Cardiac septum (tissue), 1 donor: ENCODE measurements at regions of chr4 and their contacts with region 1.

Region 1: GRCh38 chr4:112938461-112939058 is 110.9 kb upstream of the ANK2 start:
- DNase-seq: no peak

Region 2: GRCh38 chr4:112648263-112649054 is 290.1 kb before region 1 on chr4:
- intact Hi-C with region 1: no loop called
- DNase-seq: no peak

Region 3: DNA sequence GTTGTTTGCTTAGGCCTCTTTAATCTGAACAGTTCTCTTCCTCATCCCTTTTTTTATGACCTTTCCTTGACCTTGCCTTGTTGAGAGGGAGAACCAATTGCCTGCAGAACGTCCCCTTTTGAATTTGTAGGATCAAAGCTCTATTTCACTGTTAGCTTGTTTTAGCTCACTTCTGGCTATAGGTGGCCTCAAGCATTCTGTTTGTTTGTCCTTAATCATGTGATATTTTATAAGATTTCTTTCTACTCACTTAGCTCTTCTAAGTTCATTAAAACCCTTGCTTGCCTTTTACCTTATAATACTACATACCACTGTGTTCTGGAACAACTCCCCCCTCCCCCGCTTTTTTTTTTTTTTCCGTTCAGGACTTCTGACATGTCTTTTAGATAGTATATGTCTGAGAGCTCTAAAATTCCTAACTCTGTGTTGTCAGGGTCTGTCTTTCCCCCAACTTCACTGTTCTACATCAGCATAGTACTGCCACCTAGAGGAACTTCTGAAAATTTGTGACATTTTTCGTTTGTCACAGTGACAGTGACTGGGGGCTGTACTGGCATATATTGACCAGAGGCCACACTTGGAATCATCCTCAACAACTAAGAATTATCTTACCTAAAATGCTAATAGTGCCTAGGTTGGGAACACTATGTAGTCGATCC is 173.1 kb before region 1 on chr4:
- intact Hi-C with region 1: loop called (anchors 5 kb)
- DNase-seq: no peak

Region 4: GRCh38 chr4:112840061-112840460 is 98.5 kb before region 1 on chr4:
- intact Hi-C with region 1: no loop called
- DNase-seq: no peak

Region 5: GRCh38 chr4:112853662-112854256 is 84.8 kb before region 1 on chr4:
- intact Hi-C with region 1: loop called (anchors 5 kb)
- DNase-seq: no peak

Region 6: GRCh38 chr4:113394730-113395530 is 456.4 kb after region 1 on chr4:
- intact Hi-C with region 1: no loop called
- DNase-seq: no peak